ENCODE measurements at regions of chr6 and their contacts with region 1.

Region 1: GRCh38 chr6:108174371-108175175 is 8.8 kb downstream of the NR2E1 start:
- DNase-seq: peak in 1 of 2 experiments; percentile 82
- H3K4me3 ChIP-seq: peak overlapping the region in 1 of 4 experiments; percentile 53; a peak in 1 of 8 replicates
- H3K27ac ChIP-seq: no peak overlapping the region
- H3K4me1 ChIP-seq: peaks cover 0 to 26% (median 20%) of the 10 kb centered on the region in 4 experiments; a peak in 6 of 7 replicates
- H3K27me3 ChIP-seq: peaks cover 80 to 95% (median 86%) of the 10 kb centered on the region in 4 experiments
- CTCF ChIP-seq: no peak
- EP300 ChIP-seq: no peak
- POLR2A ChIP-seq: no peak
- RAD21 ChIP-seq: 0 out of 4 replicates have a peak, but pooled peaks of 1 of the 2 experiments have one; percentile 2

Region 2: DNA sequence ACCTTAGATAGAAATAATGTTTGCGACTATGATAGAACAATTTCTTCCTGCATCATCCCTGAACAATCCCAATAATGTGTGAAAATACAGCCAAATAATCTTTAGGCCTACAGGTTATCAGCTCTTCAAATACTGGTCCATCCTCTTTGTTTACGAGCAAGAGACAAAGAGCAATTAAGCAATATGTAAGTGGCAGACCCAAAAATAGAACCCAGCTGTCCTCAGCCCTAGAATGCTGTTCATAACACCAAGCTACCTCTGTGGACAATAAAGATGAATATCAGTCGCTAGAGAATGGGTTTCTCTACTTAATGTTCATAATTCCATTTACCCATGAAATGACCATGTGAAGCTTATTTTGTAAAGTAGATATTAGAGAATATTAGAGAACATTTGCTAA is 71.6 kb before region 1 on chr6:
- CTCF ChIA-PET with region 1: no interaction called
- POLR2A ChIA-PET with region 1: no interaction called
- DNase-seq: no peak
- H3K4me3 ChIP-seq: no peak overlapping the region
- H3K27ac ChIP-seq: no peak overlapping the region
- H3K4me1 ChIP-seq: peaks cover 0 to 7% (median 4%) of the 10 kb centered on the region in 4 experiments; a peak in 5 of 7 replicates
- H3K27me3 ChIP-seq: no peaks in the 10 kb centered on the region
- CTCF ChIP-seq: no peak
- EP300 ChIP-seq: no peak
- POLR2A ChIP-seq: no peak
- RAD21 ChIP-seq: no peak

Region 3: GRCh38 chr6:108113557-108114519 is 60.7 kb before region 1 on chr6:
- CTCF ChIA-PET with region 1: interaction called, 85 read pairs
- POLR2A ChIA-PET with region 1: interaction called, 7 read pairs
- DNase-seq: peak in 1 of 2 experiments; percentile 80
- H3K4me3 ChIP-seq: peak overlapping the region in 3 of 4 experiments; percentile 44 to 57 (median 52); a peak in 6 of 8 replicates
- H3K27ac ChIP-seq: no peak overlapping the region
- H3K4me1 ChIP-seq: peaks cover 0 to 22% (median 16%) of the 10 kb centered on the region in 4 experiments; a peak in 5 of 7 replicates
- H3K27me3 ChIP-seq: peaks cover 49 to 70% (median 67%) of the 10 kb centered on the region in 4 experiments
- CTCF ChIP-seq: peak in 2 of 3 experiments; percentile 45 to 61; a peak in 3 of 4 replicates
- EP300 ChIP-seq: no peak
- POLR2A ChIP-seq: no peak
- RAD21 ChIP-seq: peak; percentile 64 to 75

Region 4: DNA sequence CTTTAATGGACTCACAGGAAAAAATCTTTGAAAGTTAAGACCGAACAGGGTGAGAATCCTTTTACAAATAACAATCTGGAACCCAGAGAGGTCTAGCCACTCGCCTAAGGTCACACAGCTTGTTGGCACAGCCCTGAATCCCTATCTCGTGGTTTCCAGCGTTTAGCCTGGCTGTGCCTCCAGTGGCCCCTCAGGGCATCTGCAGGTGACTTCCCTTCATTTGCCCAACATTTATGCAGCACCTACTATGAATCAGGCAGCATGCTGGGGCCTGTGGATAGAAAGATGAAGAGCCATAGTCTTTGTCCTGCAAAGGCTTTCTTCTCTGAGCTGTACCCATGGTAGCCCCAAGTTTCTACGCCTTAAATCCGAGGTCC is 11.3 kb before region 1 on chr6:
- CTCF ChIA-PET with region 1: interaction called, 19 read pairs
- POLR2A ChIA-PET with region 1: interaction called, 19 read pairs
- DNase-seq: no peak
- H3K4me3 ChIP-seq: no peak overlapping the region
- H3K27ac ChIP-seq: no peak overlapping the region
- H3K4me1 ChIP-seq: peaks cover 14 to 40% (median 21%) of the 10 kb centered on the region in 4 experiments
- H3K27me3 ChIP-seq: peaks cover 95 to 100% (median 98%) of the 10 kb centered on the region in 4 experiments
- CTCF ChIP-seq: peak in 2 of 3 experiments; percentile 32 to 68; a peak in 3 of 4 replicates
- EP300 ChIP-seq: no peak
- POLR2A ChIP-seq: no peak
- RAD21 ChIP-seq: peak; percentile 34 to 46; a peak in 3 of 4 replicates

Region 5: GRCh38 chr6:108186226-108186625 is 11.7 kb after region 1 on chr6:
- CTCF ChIA-PET with region 1: interaction called, 26 read pairs
- POLR2A ChIA-PET with region 1: interaction called, 3 read pairs
- DNase-seq: no peak
- H3K4me3 ChIP-seq: no peak overlapping the region
- H3K27ac ChIP-seq: no peak overlapping the region
- H3K4me1 ChIP-seq: no peaks in the 10 kb centered on the region
- H3K27me3 ChIP-seq: peaks cover 0 to 3% (median 0%) of the 10 kb centered on the region in 4 experiments; a peak in 3 of 7 replicates
- CTCF ChIP-seq: no peak
- EP300 ChIP-seq: no peak
- POLR2A ChIP-seq: no peak
- RAD21 ChIP-seq: no peak

Region 6: DNA sequence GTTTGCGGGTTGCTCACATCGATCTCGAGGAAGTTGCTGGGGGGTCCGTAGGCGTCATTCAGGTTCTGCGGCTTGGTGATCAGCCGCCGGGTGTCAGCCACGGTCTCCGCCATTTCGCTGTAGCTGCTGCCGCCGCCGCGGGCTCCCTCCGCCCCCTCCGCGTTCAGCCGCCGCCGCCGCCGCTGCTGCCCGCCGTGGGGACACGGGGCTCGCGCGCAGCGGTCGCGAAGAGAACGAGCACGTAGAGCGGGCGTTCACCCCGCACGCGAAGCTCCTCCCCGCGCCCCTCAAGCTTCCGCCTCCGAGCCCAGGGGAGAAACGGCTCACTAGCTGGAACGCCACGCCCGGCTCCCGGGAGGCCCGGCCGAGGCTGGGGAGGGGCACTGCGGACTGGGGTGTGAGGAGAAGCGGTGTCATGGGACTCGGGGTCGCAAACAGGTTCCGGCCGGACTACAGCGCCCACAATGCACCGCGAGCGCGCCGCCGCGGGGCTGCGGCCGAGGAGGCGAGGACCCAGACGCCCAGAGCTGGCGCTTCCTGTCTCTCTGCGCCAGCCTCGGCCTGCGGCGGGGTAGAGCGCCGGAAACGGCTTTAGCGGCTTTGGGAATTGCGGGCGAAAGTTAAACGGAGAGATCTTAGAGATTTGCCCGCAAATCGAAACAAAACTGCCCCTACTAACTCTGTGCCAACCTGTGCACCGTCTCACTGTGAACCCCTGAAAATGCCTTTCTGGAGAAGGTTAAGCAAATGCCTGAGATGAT is 86.4 kb after region 1 on chr6 and contains the start of gene SNX3:
- CTCF ChIA-PET with region 1: interaction called, 12 read pairs
- POLR2A ChIA-PET with region 1: interaction called, 4 read pairs
- DNase-seq: peak; percentile 86 to 95
- H3K4me3 ChIP-seq: peak within 1 kb of the TSS; percentile 60 to 81 (median 72)
- H3K27ac ChIP-seq: peak within 1 kb of the TSS; percentile 69
- H3K4me1 ChIP-seq: peaks cover 0 to 3% (median 1%) of the 10 kb centered on the region in 4 experiments; a peak in 3 of 7 replicates
- H3K27me3 ChIP-seq: no peaks in the 10 kb centered on the region
- CTCF ChIP-seq: peak in 2 of 3 experiments; percentile 2 to 27; a peak in 3 of 4 replicates
- EP300 ChIP-seq: peak in 1 of 2 experiments; percentile 25; a peak in 1 of 3 replicates
- POLR2A ChIP-seq: peak; percentile 33 to 78
- RAD21 ChIP-seq: peak in 1 of 2 experiments; percentile 23; a peak in 1 of 4 replicates
- total RNA-seq, gene SNX3: 72.5 and 72.7 TPM in 2 replicates

Region 7: DNA sequence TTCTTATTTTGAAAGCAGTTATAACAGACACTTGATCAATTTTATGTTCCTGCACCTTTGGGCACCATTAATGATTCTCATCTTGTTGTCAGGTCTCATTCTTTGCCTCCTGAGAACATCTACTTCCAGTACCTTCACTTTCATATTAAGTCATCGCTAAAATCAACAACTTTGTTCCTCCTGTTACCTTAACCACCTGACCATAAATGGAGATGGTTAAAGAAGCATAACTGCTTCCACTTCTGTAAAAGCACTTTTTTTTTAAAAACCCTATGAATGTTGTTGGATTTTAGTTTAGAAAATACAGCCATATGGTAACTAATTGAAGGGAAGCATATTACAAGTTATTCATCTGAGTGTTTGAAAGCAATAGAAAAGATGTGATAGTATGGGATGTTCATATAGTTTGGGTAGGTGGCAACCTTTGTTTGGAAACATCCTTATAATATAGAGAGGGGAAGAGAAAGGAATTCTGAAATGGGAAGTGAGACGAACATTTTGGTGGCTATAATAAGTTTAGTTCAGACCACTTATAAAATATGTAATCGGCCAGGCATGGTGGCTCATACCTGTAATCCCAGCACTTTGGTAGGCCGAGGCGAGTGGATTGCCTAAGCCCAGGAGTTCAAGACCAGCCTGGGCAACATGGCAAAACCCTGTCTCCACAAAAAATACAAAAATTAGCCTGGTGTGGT is 174.2 kb after region 1 on chr6:
- CTCF ChIA-PET with region 1: no interaction called
- POLR2A ChIA-PET with region 1: no interaction called
- DNase-seq: no peak
- H3K4me3 ChIP-seq: no peak overlapping the region
- H3K27ac ChIP-seq: no peak overlapping the region
- H3K4me1 ChIP-seq: no peaks in the 10 kb centered on the region
- H3K27me3 ChIP-seq: no peaks in the 10 kb centered on the region
- CTCF ChIP-seq: no peak
- EP300 ChIP-seq: no peak
- POLR2A ChIP-seq: no peak
- RAD21 ChIP-seq: no peak

Region 8: DNA sequence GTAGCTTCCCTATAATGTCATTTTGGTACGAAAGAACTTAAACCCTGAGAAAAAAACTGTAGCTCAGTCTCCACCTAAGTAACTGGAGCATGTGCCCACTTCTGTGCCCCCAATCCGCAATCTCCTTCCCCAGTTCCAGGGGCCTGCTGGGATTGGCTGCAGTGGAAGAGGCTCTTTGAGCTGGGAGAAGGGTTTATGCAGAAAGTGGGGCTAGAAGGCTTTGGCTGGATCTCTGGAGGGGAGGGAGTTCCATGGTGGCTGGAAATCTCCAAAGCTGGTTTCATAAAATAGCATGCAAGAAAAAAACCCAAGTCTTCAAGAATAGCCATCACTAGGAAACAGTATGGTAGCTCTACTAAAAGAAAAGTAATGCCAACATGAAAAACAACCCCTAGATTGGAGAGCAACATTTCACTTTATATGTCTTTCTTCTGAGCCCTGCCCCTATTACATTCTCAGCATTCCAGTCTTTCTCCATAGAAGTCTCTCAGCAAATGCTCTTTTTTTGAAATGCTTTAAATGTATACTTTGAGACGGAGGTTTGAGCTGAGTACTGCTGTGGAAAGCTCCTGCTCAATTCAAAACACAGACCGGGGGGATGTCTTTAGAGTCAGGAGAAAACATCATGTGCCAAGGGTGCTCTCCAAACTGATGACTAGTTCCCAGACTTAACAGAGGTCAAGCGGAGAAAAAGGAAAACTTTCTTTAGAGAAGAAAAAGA is 350.1 kb after region 1 on chr6:
- CTCF ChIA-PET with region 1: interaction called, 13 read pairs
- POLR2A ChIA-PET with region 1: no interaction called
- DNase-seq: no peak
- H3K4me3 ChIP-seq: no peak overlapping the region; a peak in 1 of 8 replicates
- H3K27ac ChIP-seq: no peak overlapping the region
- H3K4me1 ChIP-seq: 0 out of 7 replicates have a peak, but pooled peaks cover 0 to 2% (median 0%) of the 10 kb centered on the region in 4 experiments
- H3K27me3 ChIP-seq: no peaks in the 10 kb centered on the region
- CTCF ChIP-seq: no peak
- EP300 ChIP-seq: no peak
- POLR2A ChIP-seq: no peak
- RAD21 ChIP-seq: no peak

Region 9: DNA sequence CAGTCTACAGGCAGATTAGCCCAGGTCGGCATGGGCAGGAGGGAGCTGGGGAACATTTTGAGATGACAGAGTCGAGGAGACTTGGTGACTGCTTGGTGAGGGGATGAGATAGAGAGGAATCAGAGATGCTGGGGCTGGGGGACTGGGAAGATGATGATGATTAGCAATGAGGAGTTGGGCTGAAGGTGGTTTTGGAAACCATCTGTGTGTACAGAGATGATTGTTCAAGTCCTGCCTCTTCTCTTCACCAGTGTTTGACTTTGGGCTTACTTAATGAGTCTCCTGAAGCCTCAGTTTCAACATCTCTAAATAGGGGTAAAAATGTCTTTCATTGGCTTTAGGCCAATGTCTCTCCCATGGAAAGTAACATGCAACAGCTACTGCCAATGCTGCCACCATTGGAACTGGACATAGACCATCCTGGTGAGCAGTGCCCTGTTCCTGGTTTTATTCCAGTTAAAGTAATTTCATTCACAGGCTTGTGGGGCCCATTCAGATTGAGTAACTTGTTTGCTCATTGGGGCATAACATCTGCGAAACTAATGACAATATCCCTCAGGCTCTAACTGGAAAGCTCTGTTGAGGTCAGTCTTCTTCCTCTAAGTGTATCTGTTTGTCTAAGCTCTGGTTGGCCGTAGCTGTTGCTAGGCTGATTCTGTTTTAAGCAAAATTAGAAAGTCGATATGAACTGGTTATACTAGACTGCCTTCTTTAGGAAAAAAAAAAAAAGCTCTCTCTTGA is 772.7 kb after region 1 on chr6:
- CTCF ChIA-PET with region 1: no interaction called
- POLR2A ChIA-PET with region 1: no interaction called
- DNase-seq: no peak
- H3K4me3 ChIP-seq: no peak overlapping the region
- H3K27ac ChIP-seq: no peak overlapping the region
- H3K4me1 ChIP-seq: peaks cover 0 to 3% (median 2%) of the 10 kb centered on the region in 4 experiments; a peak in 6 of 7 replicates
- H3K27me3 ChIP-seq: no peaks in the 10 kb centered on the region
- CTCF ChIP-seq: no peak
- EP300 ChIP-seq: no peak
- POLR2A ChIP-seq: no peak
- RAD21 ChIP-seq: no peak